ENCODE measurements at regions of chr19 and their contacts with region 1.

Region 1: GRCh38 chr19:3505598-3506383 is at the start of gene FZR1:
- DNase-seq: peak; percentile 100
- H3K4me3 Mint-ChIP-seq: peak within 1 kb of the TSS; percentile 93
- H3K27ac Mint-ChIP-seq: peak within 1 kb of the TSS; percentile 93
- H3K4me1 Mint-ChIP-seq: peaks cover 43% of the 10 kb centered on the region
- H3K27me3 Mint-ChIP-seq: no peaks in the 10 kb centered on the region
- total RNA-seq, gene FZR1: 43.5 to 46.9 TPM

Region 2: DNA sequence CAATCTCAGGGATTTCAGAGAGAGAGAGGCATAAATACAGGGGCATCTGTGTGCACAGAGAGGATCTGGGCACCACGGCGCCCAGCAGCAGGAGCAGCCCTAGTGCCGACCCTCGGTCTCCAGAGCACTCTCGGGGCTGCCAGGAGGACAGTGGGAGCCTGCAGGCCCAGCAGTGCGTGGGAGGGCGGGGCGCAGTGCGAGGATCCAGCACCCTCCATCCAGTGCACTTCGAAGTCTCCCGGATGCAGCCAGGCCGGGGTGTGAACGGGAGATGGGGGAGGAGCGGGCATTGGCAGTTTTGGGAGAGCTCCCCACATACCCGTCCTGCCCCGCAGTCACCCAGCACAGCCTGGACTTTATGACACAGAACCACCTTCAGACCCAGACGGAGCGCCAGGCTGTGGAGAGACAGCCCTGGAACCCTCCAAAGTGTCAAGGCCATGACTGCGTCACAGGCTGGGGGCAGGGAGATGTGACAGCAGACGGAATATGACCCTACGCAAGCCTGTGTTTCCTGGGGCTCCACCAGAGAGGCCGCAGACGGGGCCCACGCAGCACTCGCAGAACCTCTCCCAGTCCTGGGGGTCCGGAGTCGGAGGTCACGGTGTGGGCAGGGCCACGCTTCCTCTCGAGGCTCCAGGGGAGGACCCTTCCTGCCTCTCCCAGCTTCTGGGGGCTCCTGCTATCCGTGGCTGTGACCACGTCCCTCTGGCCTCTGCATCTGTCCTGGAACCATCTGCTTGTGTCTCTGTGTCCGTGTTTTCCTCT is 18.5 kb after region 1 on chr19:
- CTCF ChIA-PET with region 1: no interaction called
- POLR2A ChIA-PET with region 1: no interaction called
- intact Hi-C with region 1: no loop called
- DNase-seq: no peak
- H3K4me3 Mint-ChIP-seq: no peak overlapping the region
- H3K27ac Mint-ChIP-seq: no peak overlapping the region
- H3K4me1 Mint-ChIP-seq: no peaks in the 10 kb centered on the region
- H3K27me3 Mint-ChIP-seq: no peaks in the 10 kb centered on the region

Region 3: GRCh38 chr19:3572132-3572854 is 66.5 kb after region 1 on chr19:
- CTCF ChIA-PET with region 1: no interaction called
- POLR2A ChIA-PET with region 1: no interaction called
- intact Hi-C with region 1: loop called (anchors 2 kb)
- DNase-seq: peak; percentile 100
- H3K4me3 Mint-ChIP-seq: peak overlapping the region; percentile 66
- H3K27ac Mint-ChIP-seq: peak overlapping the region; percentile 42
- H3K4me1 Mint-ChIP-seq: peaks cover 10% of the 10 kb centered on the region
- H3K27me3 Mint-ChIP-seq: no peaks in the 10 kb centered on the region

Region 4: GRCh38 chr19:3626473-3627350 is 120.9 kb after region 1 on chr19 and contains the start of gene CACTIN:
- CTCF ChIA-PET with region 1: no interaction called
- POLR2A ChIA-PET with region 1: no interaction called
- intact Hi-C with region 1: loop called (anchors 2 kb)
- DNase-seq: peak; percentile 99
- H3K4me3 Mint-ChIP-seq: peak within 1 kb of the TSS; percentile 88
- H3K27ac Mint-ChIP-seq: peak within 1 kb of the TSS; percentile 98
- H3K4me1 Mint-ChIP-seq: peaks cover 24% of the 10 kb centered on the region
- H3K27me3 Mint-ChIP-seq: no peaks in the 10 kb centered on the region
- total RNA-seq, gene CACTIN: 25.2 to 27.2 TPM

Region 5: GRCh38 chr19:3809881-3810707 is 304.3 kb after region 1 on chr19:
- CTCF ChIA-PET with region 1: no interaction called
- POLR2A ChIA-PET with region 1: no interaction called
- intact Hi-C with region 1: loop called (anchors 1 kb)
- DNase-seq: peak; percentile 58
- H3K4me3 Mint-ChIP-seq: no peak overlapping the region
- H3K27ac Mint-ChIP-seq: peak overlapping the region; percentile 42
- H3K4me1 Mint-ChIP-seq: peaks cover 51% of the 10 kb centered on the region
- H3K27me3 Mint-ChIP-seq: no peaks in the 10 kb centered on the region